ENCODE measurements at regions of chr3 and their contacts with region 1.

Region 1: DNA sequence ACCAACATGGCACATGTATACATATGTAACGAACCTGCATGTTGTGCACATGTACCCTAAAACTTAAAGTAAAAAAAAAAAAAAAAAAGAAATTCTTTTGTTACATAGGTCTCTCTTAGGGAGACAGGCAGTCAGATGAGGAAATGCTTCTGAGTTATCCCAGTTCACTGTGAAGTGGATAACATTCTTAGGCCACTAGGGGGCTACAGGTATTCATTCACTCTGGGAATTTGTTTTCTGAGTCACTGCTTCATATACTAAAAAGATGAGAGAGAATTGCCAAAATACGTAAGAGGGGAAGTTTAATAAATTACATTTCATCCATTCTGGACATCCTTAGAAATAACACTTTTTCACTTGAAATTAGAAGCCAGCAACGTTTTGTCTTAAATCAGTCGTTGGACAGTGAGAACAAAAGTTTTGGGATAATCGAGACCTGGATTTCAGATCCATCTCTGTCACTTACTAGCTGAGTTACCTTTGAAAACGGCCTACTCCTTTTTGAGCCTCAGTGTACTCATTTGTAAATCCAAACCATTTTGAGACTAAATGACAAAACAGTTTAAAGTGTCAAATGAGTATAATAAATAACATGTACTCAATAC is 738.4 kb upstream of the ALCAM start:
- DNase-seq: no peak
- ATAC-seq: peak in 1 of 2 donors; percentile 65

Region 2: DNA sequence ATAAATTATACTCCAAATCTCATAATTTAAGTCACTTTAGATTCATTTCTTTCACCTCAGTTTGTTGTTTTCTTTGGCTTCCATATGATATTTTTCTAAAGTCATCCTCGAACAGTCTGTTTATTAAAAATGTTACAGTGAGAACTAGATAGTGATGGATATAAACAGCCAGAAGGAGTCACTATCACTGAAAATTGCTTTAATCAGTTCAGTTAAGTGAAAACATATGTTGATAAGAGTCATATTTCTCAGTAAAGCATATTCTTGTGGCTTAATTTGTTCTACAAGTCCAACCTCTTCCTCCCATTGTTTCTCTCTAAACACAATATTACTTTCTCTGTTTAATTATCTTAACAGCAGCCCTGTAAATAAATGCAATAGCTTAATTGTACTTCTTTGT is 310.9 kb after region 1 on chr3:
- intact Hi-C with region 1: no loop called
- DNase-seq: no peak
- ATAC-seq: no peak

Region 3: DNA sequence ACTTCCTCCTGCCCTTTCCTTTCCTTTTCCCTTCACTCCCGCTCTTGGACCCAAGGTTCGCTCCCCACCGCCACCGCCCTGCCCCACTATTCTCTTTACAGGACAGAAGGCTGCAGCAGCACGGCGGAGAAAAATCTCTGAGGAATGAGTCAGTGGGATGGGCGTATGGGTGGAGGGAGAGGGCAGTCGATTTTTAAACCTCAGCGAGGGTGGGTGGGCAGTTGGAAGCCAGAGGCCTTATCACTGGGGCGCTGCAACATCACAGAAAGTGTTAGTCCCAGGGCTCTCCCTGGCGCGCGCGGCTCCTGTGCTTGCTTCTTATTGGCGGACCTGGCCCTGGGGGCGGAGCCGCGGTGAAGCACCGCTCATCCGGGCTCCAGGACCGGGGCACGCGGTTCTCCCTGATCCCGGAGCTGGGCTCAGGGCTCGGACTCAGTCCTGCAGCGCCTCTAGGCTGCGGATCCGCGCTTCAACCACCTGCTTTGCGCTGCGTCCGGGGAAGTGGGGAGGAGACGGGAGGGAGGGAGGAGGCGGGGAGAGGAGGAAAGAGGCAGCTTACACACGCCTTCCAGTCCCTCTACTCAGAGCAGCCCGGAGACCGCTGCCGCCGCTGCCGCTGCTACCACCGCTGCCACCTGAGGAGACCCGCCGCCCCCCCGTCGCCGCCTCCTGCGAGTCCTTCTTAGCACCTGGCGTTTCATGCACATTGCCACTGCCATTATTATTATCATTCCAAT is 738.2 kb after region 1 on chr3 and contains the start of gene ALCAM:
- intact Hi-C with region 1: loop called in 1 of 2 experiments (anchors 5 kb)
- DNase-seq: peak; percentile 93
- ATAC-seq: peak; percentile 92 to 96
- total RNA-seq, gene ALCAM: 5.8 to 7.4 TPM